ENCODE measurements at regions of chr15 and their contacts with region 1.

Region 1: GRCh38 chr15:80798911-80799310 is 19.7 kb downstream of the CEMIP start:
- DNase-seq: no peak
- H3K4me3 Mint-ChIP-seq: no peak overlapping the region
- H3K27ac Mint-ChIP-seq: no peak overlapping the region
- H3K4me1 Mint-ChIP-seq: peaks cover 12% of the 10 kb centered on the region
- H3K27me3 Mint-ChIP-seq: peaks cover 17% of the 10 kb centered on the region
- CTCF ChIP-seq: no peak

Region 2: GRCh38 chr15:80856809-80857377 is 58.0 kb after region 1 on chr15:
- CTCF ChIA-PET with region 1: no interaction called
- intact Hi-C with region 1: loop called (anchors 5 kb)
- DNase-seq: peak; percentile 65
- H3K4me3 Mint-ChIP-seq: no peak overlapping the region
- H3K27ac Mint-ChIP-seq: peak overlapping the region; percentile 0
- H3K4me1 Mint-ChIP-seq: peaks cover 40% of the 10 kb centered on the region
- H3K27me3 Mint-ChIP-seq: peaks cover 18% of the 10 kb centered on the region
- CTCF ChIP-seq: no peak

Region 3: DNA sequence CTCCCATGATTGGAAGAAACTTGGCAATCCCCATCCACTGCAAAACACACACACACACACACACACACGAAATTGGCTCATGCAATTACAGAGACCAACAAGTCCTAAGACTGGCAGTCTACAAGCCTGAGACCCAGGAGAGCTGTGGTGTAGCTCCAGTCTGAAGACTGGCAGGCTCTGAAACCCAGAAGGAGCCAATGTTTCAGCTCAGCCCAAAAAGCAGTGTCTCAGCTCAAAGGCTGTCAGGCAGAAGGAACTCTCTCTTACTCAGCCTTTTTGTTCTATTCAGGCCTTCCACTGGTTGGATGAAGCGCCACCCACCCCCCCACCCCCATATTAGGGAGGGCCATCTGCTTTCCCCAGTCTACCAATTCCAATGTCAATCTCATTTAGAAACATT is 158.6 kb after region 1 on chr15:
- CTCF ChIA-PET with region 1: no interaction called
- intact Hi-C with region 1: loop called (anchors 2 kb)
- DNase-seq: no peak
- H3K4me3 Mint-ChIP-seq: no peak overlapping the region
- H3K27ac Mint-ChIP-seq: no peak overlapping the region
- H3K4me1 Mint-ChIP-seq: peaks cover 33% of the 10 kb centered on the region
- H3K27me3 Mint-ChIP-seq: no peaks in the 10 kb centered on the region
- CTCF ChIP-seq: no peak

Measured in Calu3 (cell line).